ENCODE measurements at regions of chr6 and their contacts with region 1.

Region 1: DNA sequence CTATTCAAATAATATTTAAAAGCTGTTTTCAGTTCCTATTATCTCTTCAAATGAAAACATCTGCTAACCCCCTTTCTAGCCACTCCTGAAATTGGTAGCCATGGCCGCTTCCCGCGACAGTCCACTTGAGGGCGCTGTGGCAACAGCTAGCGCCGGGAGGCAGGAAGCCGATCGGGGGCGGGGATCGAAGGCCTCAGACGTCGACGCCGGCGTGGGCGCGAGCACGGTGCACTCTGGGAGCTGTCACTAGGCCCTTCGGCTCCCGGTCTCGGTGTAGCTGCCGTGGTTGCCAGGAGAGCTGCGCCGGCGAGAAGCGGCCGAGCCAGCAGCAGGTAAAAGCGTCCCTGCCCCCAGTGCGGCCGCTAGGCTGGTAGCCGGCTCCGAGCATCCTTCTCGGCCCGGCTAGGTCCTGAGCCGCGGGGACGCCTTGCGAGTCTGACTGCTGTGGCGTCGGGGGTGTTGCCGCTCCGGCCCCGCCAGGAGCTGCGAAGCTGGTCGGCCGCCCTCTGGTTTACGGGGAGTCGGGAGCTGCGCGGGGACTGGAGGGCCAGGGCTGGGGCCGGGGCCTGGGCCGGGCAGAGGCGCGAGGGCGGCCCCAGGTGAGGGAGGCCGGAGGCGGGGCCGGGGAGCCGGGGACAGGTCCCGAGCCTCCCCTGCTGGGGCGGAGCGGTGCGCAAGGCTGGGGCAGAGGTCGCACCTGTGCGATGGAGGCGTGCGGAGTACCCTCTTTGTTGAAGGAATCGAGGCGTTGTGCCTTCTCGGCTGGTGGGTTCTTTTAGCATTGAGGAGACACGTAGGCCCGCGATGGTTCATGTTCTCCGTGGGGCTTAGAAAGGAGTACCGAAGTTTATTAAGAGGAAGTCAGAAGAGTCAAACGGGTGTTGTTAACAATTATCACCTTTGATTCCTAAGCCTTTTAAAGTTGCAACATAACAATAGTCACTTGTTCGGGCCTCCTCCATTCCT is at the start of gene DOP1A:
- DNase-seq: peak; percentile 96 to 98 (median 97)
- ATAC-seq: peak; percentile 92 to 98 (median 98)
- H3K4me3 ChIP-seq: peak within 1 kb of the TSS; percentile 79 to 98 (median 90)
- H3K27ac ChIP-seq: peak within 1 kb of the TSS; percentile 67 to 95 (median 90)
- H3K4me1 ChIP-seq: peaks cover 0 to 54% (median 32%) of the 10 kb centered on the region in 12 donors
- H3K27me3 ChIP-seq: no peaks in the 10 kb centered on the region
- CTCF ChIP-seq: peak; percentile 96 to 100 (median 98)
- POLR2A ChIP-seq: peak in 1 of 2 donors; percentile 63
- total RNA-seq, gene DOP1A: 12.6 to 25.7 (median 24.0) TPM

Region 2: DNA sequence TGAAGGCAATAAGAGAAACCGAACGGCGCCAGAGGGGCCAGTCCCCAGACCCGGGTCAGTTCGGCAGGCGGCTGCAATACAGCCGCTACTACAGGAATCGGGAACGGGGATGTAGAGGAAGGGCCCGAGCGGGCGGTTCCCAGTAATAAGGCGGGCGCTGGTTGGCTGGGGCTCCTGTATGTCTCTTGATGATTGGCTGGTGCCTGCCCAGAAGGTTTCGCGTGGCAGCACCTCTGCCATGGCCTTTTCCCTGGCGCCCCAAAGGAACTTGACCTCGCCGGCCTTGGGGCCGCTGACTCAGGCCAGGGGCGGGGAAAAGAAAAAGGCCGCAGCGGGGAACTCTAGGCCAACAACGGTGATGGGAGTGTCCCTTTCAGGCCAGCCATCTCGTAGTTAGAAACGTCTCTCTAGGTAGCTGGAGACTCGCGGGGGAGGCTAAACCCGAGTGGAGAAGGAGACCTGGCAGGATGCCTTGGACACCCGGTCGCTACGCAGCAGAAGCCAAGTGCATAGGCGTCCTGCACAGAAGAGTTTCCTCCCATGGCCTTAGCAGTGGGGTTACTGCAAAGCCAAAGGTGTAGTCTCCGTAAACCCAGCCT is 820.0 kb before region 1 on chr6 and contains the start of gene IBTK:
- intact Hi-C with region 1: loop called in 1 of 10 experiments (anchors 5 kb)
- DNase-seq: peak; percentile 95 to 96 (median 96)
- ATAC-seq: peak; percentile 98 to 99 (median 99)
- H3K4me3 ChIP-seq: peak within 1 kb of the TSS; percentile 65 to 98 (median 78)
- H3K27ac ChIP-seq: peak within 1 kb of the TSS; percentile 88 to 97 (median 92)
- H3K4me1 ChIP-seq: peaks cover 0 to 48% (median 22%) of the 10 kb centered on the region in 12 donors
- H3K27me3 ChIP-seq: no peaks in the 10 kb centered on the region
- CTCF ChIP-seq: no peak
- POLR2A ChIP-seq: peak; percentile 46 to 78
- total RNA-seq, gene IBTK: 19.4 to 39.2 (median 29.2) TPM

Region 3: DNA sequence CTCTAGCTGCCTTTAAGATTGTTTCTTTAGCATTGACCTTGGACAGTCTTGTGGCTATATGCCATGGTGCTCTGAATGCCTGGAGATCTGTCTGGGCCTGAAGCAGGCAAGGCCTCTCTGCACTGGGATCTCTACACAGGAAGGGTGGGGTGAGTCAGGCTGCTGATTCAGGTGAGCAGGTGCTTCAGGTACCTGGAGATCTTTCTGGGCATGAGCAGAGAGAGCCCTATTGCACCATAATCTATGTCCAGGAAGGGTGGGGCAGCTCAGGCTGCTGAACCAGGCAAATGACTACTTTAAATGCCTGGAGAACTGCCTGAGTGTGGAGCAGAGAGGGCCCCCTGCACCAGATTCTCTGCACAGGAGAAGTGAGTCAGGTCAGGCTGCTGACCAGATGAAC is 609.6 kb before region 1 on chr6:
- intact Hi-C with region 1: no loop called
- DNase-seq: no peak
- ATAC-seq: no peak
- H3K4me3 ChIP-seq: no peak overlapping the region
- H3K27ac ChIP-seq: no peak overlapping the region
- H3K4me1 ChIP-seq: no peaks in the 10 kb centered on the region
- H3K27me3 ChIP-seq: no peaks in the 10 kb centered on the region
- CTCF ChIP-seq: no peak
- POLR2A ChIP-seq: no peak

Region 4: DNA sequence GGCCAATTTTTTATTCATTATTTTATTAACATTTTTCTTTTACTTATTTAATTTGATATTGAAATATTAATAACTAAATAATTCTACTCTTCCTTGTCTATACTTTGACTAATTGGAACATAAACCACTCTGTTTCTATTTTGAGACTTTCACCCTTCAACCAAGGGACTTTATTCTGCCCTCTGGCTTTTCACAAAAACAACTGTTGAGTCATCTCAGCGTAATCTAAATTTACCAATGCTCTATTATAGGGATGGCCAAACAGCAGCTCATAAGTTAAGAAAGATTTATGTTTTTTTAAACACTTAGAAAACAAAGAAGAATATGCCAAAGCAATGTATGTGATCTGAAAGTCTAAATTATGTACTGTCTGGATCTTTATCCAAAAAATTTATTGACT is 46.4 kb after region 1 on chr6:
- intact Hi-C with region 1: loop called in 3 of 10 experiments (anchors 5 kb)
- DNase-seq: no peak
- ATAC-seq: peak in 1 of 4 donors; percentile 69
- H3K4me3 ChIP-seq: no peak overlapping the region
- H3K27ac ChIP-seq: no peak overlapping the region
- H3K4me1 ChIP-seq: peaks cover 0 to 14% (median 0%) of the 10 kb centered on the region in 12 donors
- H3K27me3 ChIP-seq: no peaks in the 10 kb centered on the region
- CTCF ChIP-seq: no peak
- POLR2A ChIP-seq: no peak

Region 5: GRCh38 chr6:83153883-83154521 is 86.3 kb after region 1 on chr6:
- intact Hi-C with region 1: no loop called
- DNase-seq: no peak
- ATAC-seq: no peak
- H3K4me3 ChIP-seq: no peak overlapping the region
- H3K27ac ChIP-seq: no peak overlapping the region
- H3K4me1 ChIP-seq: peaks cover 0 to 17% (median 0%) of the 10 kb centered on the region in 12 donors
- H3K27me3 ChIP-seq: no peaks in the 10 kb centered on the region
- CTCF ChIP-seq: no peak
- POLR2A ChIP-seq: no peak

Region 6: DNA sequence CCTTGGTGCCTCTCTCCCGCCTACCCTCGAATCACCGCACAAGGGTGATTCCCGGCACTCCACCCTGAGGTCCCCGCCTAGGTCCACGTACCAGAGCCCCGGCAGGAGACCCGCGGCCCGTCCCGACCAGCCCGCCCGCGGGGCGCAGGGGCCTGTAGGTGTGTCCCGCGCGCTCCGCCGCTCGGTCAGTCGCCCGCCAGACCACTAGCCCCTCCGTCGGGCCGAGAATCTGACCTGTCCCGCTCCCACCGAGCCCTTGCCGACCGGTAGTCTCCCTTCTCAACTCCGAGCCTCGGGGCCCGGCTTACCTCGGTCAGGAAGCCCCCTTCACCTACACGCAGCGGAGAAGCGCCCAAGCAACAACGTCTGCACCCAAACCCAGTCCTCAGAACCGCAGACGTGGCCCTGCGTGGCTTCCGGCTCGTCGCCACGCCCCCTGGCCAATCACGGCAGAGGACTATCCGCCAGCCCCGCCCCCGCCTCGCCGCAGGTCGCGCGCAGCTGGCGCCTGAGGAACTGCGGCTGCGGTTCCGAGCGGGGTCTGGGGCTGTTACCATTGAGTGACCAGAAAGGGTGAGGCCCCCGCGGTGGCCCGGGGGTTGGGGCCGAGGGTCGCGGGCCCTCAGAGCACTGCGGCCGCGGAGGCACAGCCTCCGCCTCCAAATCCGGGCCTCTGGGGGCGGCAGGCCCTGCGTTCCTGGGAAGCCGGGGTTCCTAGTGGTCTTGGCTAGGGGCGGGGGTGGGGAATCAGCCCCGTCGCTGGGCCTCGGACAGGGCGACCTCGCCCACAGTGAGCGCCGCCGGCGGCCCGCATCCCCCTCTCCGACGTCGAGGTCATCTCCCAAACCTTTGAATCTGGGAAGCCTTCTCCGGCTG is 125.4 kb after region 1 on chr6 and contains the starts of genes PGM3 and RWDD2A:
- intact Hi-C with region 1: loop called in 4 of 10 experiments (anchors 5 to 10 kb)
- DNase-seq: peak; percentile 92 to 95 (median 93)
- ATAC-seq: peak; percentile 97 to 100 (median 99)
- H3K4me3 ChIP-seq: peak within 1 kb of the TSS; percentile 66 to 99 (median 82)
- H3K27ac ChIP-seq: peak within 1 kb of the TSS; percentile 27 to 90 (median 73)
- H3K4me1 ChIP-seq: peaks cover 0 to 29% (median 16%) of the 10 kb centered on the region in 12 donors
- H3K27me3 ChIP-seq: no peaks in the 10 kb centered on the region
- CTCF ChIP-seq: no peak
- POLR2A ChIP-seq: peak; percentile 1 to 87
- total RNA-seq, gene PGM3: 7.3 to 25.1 (median 15.8) TPM
- total RNA-seq, gene RWDD2A: 1.6 to 4.8 (median 3.4) TPM

Region 7: GRCh38 chr6:83514866-83515466 is 447.2 kb after region 1 on chr6:
- intact Hi-C with region 1: loop called in 9 of 10 experiments (anchors 5 to 10 kb)
- DNase-seq: no peak
- ATAC-seq: peak in 1 of 4 donors; percentile 47
- H3K4me3 ChIP-seq: no peak overlapping the region
- H3K27ac ChIP-seq: no peak overlapping the region
- H3K4me1 ChIP-seq: peaks cover 0 to 13% (median 5%) of the 10 kb centered on the region in 12 donors
- H3K27me3 ChIP-seq: peaks cover 0 to 26% (median 0%) of the 10 kb centered on the region in 9 donors
- CTCF ChIP-seq: peak; percentile 60 to 89 (median 76)
- POLR2A ChIP-seq: no peak

Measured in heart left ventricle (tissue), 16 donors.